CD4-positive, alpha-beta memory T cell (primary cell): ENCODE measurements at regions of chr1 and their contacts with region 1.

Region 1: DNA sequence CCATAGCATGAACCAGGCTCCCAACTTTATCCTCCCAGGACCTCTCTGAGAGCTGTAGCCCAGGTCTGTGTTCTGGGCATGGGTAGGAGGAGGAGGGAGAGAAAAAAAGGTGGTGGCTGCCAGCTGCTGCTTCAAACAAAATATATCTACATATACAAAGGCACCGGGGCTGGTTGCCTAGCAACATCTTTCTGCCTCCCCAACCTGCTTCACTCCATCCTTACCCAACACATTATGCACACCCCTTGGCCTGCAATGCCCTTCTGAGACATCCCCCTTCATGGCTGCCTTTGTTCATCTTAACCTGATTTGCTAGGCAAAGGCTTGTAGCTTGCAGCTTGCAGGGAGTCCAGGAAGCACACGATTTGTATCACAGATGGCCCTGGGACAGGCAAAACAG is 27.2 kb upstream of the ATP1A1 start:
- DNase-seq: peak; percentile 74 to 85 (median 83)
- H3K4me3 ChIP-seq: no peak overlapping the region
- H3K4me3 Mint-ChIP-seq: peak overlapping the region; percentile 22 to 74 (median 57)
- H3K27ac ChIP-seq: peak overlapping the region; percentile 48
- H3K27ac Mint-ChIP-seq: peak overlapping the region; percentile 74 to 97 (median 95)
- H3K4me1 ChIP-seq: peaks cover 64% of the 10 kb centered on the region
- H3K4me1 Mint-ChIP-seq: peaks cover 38 to 76% (median 56%) of the 10 kb centered on the region in 4 donors
- H3K27me3 ChIP-seq: no peaks in the 10 kb centered on the region
- H3K27me3 Mint-ChIP-seq: no peaks in the 10 kb centered on the region

Region 2: DNA sequence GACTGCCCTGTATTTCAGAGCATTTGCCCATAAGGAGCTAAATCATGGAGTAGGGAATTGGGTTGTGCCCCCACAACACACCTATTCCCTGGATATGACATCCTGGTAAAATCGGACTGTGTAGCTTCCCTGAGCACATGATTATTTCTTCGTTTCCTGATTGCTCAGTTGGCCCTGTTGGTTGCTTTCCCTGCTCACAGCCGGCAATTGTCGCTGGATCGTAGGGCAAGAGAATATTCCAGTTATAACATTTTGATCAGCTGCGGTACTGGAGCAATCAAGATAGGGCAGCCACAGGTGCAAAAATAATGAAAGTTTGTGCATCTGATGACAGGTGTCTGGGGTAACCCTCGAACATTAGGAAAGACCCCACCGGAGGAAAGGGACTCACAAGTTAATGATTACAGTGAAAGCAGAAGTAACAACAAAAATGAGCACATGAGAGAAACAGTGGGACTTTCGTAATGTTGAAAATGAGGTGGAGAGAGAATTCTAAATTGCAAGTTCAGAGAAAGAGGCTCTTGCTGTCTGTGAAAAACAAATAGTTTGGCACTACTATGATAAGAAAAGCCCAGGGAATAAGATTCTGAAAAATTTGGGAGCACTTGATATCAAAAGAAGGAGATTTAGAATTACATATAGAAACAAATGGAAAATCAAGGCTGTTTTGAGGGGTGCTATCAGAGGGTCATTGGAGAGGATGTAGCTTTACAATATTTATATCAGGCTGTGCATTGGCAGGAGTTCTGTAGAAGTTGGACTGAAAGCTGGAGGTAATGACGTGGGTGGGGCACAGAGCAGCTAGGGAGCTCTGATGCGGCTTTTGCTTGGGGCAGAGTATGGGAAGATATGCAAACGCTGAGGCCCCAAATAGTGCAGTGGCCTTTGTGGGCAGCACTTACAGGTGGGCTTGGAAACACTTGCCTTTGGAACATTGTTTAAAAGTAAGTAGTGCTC is 235.0 kb before region 1 on chr1 and contains the start of gene MAB21L3:
- CTCF ChIA-PET with region 1: no interaction called
- POLR2A ChIA-PET with region 1: no interaction called
- intact Hi-C with region 1: no loop called
- DNase-seq: no peak
- H3K4me3 ChIP-seq: no peak within 1 kb of the TSS
- H3K4me3 Mint-ChIP-seq: no peak within 1 kb of the TSS
- H3K27ac ChIP-seq: no peak within 1 kb of the TSS
- H3K27ac Mint-ChIP-seq: peak within 1 kb of the TSS in 1 of 7 donors; percentile 1
- H3K4me1 ChIP-seq: no peaks in the 10 kb centered on the region
- H3K4me1 Mint-ChIP-seq: no peaks in the 10 kb centered on the region
- H3K27me3 ChIP-seq: no peaks in the 10 kb centered on the region
- H3K27me3 Mint-ChIP-seq: peaks cover 15 to 18% of the 10 kb centered on the region in 2 donors
- total RNA-seq, gene MAB21L3: not detected

Region 3: DNA sequence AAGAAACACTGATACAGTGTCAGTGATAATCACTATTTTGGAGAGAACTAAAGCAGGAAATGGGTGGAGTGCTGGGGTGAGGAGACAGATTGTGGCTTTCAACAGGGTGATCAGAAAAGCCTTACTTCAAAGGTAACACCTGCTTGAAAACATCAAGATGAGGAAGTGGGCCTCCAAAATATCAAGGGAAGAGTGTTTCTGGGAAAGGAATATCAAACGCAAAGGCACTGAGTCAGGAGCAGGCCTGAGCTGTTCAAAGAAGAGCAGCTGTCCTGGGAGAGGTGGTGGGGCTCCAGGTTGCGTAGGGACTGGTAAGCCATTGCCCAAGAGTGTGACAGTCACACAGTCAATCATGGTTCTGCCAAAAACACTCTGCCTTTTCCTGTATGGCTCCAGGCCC is 19.9 kb before region 1 on chr1:
- CTCF ChIA-PET with region 1: interaction called, 4 read pairs
- POLR2A ChIA-PET with region 1: interaction called, 21 read pairs
- intact Hi-C with region 1: loop called (anchors 2 kb)
- DNase-seq: peak; percentile 56 to 72 (median 68)
- H3K4me3 ChIP-seq: peak overlapping the region in 1 of 2 donors; percentile 19
- H3K4me3 Mint-ChIP-seq: peak overlapping the region; percentile 53 to 83 (median 74)
- H3K27ac ChIP-seq: peak overlapping the region; percentile 60
- H3K27ac Mint-ChIP-seq: peak overlapping the region; percentile 74 to 98 (median 90)
- H3K4me1 ChIP-seq: peaks cover 79% of the 10 kb centered on the region
- H3K4me1 Mint-ChIP-seq: peaks cover 56 to 91% (median 78%) of the 10 kb centered on the region in 4 donors
- H3K27me3 ChIP-seq: no peaks in the 10 kb centered on the region
- H3K27me3 Mint-ChIP-seq: no peaks in the 10 kb centered on the region